Transverse colon (tissue), 4 donors: ENCODE measurements at regions of chrX and their contacts with region 1.

Region 1: DNA sequence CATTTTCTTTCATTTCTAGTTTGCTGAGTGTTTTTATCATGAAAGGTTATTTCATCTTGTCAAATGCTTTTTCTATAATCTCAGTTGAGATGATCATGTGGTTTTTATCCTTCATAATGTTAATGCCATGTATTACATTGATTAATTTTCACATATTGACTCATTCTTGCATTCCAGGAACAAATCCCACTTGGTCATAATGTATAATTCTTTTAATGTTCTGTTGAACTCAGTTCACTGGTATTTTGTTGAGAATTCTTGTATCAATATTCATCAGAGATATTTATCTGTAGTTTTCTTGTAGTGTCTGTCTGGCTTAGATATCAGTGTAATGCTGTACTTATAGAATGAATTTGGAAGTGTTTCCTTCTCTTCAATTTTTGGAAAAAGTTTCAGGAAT is 16.7 kb upstream of the LHFPL1 start:
- DNase-seq: no peak
- H3K4me3 ChIP-seq: no peak overlapping the region
- H3K27ac ChIP-seq: no peak overlapping the region
- H3K4me1 ChIP-seq: no peaks in the 10 kb centered on the region
- H3K27me3 ChIP-seq: no peaks in the 10 kb centered on the region
- CTCF ChIP-seq: no peak
- EP300 ChIP-seq: no peak
- POLR2A ChIP-seq: no peak

Region 2: GRCh38 chrX:112654871-112655270 is 41.6 kb before region 1 on chrX:
- in situ Hi-C with region 1: no loop called
- intact Hi-C with region 1: loop called (anchors 2 kb)
- DNase-seq: no peak
- H3K4me3 ChIP-seq: no peak overlapping the region
- H3K27ac ChIP-seq: no peak overlapping the region
- H3K4me1 ChIP-seq: no peaks in the 10 kb centered on the region
- H3K27me3 ChIP-seq: no peaks in the 10 kb centered on the region
- CTCF ChIP-seq: no peak
- EP300 ChIP-seq: no peak
- POLR2A ChIP-seq: no peak